ENCODE measurements at regions of chr9 and their contacts with region 1.

Region 1: GRCh38 chr9:71249729-71250317 is 128.4 kb upstream of the TRPM3 start:
- DNase-seq: peak in 5 of 7 donors; percentile 12 to 39 (median 21)
- H3K4me3 ChIP-seq: no peak overlapping the region
- H3K27ac ChIP-seq: no peak overlapping the region
- H3K4me1 ChIP-seq: no peaks in the 10 kb centered on the region
- H3K27me3 ChIP-seq: no peaks in the 10 kb centered on the region
- CTCF ChIP-seq: peak; percentile 64 to 89 (median 76)
- POLR2A ChIP-seq: no peak

Region 2: DNA sequence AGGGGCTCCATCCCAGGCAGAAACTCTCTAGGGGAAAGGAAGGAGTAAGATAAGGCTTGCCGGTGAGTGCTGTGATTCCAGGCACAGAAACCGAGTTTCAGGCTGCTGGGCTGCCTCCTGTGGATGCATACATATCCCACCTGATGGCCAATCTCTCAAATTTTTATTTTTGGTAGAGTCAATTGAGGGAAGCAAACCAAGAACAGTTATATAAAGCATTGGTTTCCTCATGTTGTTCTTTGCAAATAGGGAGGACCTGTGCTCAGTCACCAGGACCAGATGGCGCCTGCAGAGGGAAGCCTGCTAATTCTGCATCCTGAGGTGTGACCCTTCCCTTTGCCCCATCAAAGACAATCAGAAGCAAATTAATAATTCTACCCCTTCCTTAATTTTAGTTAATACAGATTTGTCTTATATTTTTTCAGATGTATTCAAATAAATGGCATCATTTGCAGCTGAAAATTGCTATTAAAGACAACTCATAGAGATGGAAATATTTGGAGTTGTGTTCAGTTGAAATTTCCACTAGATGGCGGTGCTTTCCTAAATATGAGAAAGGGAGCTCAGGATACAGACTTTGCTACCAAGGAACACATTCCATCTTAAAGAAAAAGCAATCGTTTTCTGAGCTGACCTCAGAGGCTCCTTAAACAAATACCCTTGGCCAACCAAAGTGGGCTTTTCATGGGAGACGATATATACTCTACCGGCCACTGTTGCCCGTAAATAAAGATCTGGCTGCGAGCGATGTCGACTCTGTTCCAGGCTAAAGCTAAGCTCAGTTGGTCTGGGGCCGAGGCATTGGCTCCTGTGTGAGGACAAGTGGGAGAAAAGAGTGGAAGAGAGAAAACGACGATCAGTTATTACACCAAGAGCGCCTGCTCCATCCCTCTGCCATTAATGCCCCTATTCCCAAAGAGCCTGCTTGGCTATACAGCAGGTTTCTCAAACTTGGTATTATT is 609.7 kb before region 1 on chr9:
- intact Hi-C with region 1: loop called in 1 of 2 experiments (anchors 5 kb)
- DNase-seq: peak in 2 of 7 donors; percentile 10 to 36
- H3K4me3 ChIP-seq: no peak overlapping the region
- H3K27ac ChIP-seq: no peak overlapping the region
- H3K4me1 ChIP-seq: no peaks in the 10 kb centered on the region
- H3K27me3 ChIP-seq: no peaks in the 10 kb centered on the region
- CTCF ChIP-seq: peak; percentile 69 to 82 (median 77)
- POLR2A ChIP-seq: no peak

Region 3: DNA sequence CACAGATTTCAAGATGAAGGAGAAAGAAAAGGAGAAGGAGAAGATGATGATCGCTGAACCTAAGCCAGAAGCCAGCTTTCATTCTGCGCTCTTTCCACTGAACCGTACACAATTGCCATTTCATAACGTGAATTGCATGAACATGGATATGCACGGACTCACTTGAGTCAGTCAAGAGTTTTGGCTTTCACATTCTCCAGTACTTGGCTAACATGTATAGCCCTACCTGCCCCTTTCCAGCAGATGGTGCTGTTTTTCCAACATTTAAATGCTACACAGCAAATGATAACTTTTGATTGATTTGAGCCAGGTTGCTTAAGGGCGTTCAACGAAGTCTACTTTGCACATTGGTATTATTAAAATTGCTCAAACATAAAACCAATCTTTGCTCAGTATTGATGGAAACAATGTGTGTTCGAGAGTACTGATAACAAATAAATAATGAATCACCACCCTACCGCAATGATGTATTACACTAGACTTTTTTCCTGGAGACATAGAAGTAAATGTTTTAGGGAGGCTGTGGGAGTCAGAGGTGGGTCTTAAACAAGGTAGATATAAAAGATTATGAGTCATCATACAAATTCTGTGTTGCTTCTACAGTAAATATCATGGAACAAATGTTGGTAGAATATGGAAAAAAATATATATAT is 324.8 kb before region 1 on chr9:
- intact Hi-C with region 1: loop called (anchors 5 to 10 kb)
- DNase-seq: peak; percentile 26 to 83 (median 49)
- H3K4me3 ChIP-seq: peak overlapping the region in 1 of 4 donors; percentile 39
- H3K27ac ChIP-seq: peak overlapping the region in 2 of 5 donors; percentile 35 to 42
- H3K4me1 ChIP-seq: peaks cover 0 to 9% of the 10 kb centered on the region in 2 donors
- H3K27me3 ChIP-seq: no peaks in the 10 kb centered on the region
- CTCF ChIP-seq: peak; percentile 53 to 89 (median 78)
- POLR2A ChIP-seq: no peak

Region 4: DNA sequence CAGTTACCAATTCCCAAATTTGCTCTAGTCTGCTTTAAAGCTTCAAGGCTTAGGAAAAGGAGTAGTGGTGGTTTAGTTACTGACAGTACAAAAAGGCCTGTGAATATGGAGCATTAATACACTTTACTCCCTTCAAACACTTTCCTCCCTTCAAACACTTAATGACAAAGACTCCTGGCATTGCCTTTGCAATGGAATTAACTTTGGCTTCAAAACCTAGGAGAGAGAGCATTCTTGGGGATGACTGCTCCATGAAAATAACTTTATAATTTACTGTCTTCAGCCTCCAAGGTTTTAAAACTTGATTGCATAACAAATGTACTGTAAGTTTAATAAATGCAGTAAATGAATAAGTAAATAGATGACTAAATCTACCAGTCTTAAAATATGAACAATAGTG is 314.0 kb before region 1 on chr9:
- intact Hi-C with region 1: loop called in 1 of 2 experiments (anchors 10 kb)
- DNase-seq: no peak
- H3K4me3 ChIP-seq: no peak overlapping the region
- H3K27ac ChIP-seq: no peak overlapping the region
- H3K4me1 ChIP-seq: no peaks in the 10 kb centered on the region
- H3K27me3 ChIP-seq: no peaks in the 10 kb centered on the region
- CTCF ChIP-seq: no peak
- POLR2A ChIP-seq: no peak

Region 5: GRCh38 chr9:71096421-71097108 is 153.3 kb before region 1 on chr9:
- intact Hi-C with region 1: no loop called
- DNase-seq: peak; percentile 24 to 68 (median 27)
- H3K4me3 ChIP-seq: no peak overlapping the region
- H3K27ac ChIP-seq: no peak overlapping the region
- H3K4me1 ChIP-seq: no peaks in the 10 kb centered on the region
- H3K27me3 ChIP-seq: no peaks in the 10 kb centered on the region
- CTCF ChIP-seq: no peak
- POLR2A ChIP-seq: no peak

Measured in adrenal gland (tissue), 19 donors.